Upper lobe of right lung (tissue), 1 donor: ENCODE measurements at regions of chr2 and their contacts with region 1.

Region 1: DNA sequence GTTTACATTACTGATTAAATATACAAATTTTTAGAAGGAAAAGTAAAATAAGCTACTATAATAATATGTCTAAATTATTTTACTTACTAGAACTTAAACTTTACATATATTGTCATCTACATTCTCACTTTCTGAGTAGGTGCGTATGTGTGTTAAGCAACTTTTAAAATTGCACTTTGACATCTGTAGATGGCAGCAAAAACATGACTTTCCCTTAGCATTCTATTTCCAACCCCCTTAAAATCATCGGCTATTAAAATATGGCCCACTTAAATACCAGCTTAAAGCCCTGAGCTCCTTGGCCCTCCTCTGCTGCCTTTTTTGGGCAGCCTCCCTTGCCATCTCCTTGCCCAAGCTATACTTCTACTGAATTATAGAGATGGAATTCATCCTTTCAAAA is 78.0 kb downstream of the UPP2 start:
- DNase-seq: no peak
- ATAC-seq: no peak
- H3K4me3 ChIP-seq: no peak overlapping the region
- H3K27ac ChIP-seq: no peak overlapping the region
- H3K4me1 ChIP-seq: no peaks in the 10 kb centered on the region
- H3K27me3 ChIP-seq: no peaks in the 10 kb centered on the region
- CTCF ChIP-seq: peak; percentile 45

Region 2: DNA sequence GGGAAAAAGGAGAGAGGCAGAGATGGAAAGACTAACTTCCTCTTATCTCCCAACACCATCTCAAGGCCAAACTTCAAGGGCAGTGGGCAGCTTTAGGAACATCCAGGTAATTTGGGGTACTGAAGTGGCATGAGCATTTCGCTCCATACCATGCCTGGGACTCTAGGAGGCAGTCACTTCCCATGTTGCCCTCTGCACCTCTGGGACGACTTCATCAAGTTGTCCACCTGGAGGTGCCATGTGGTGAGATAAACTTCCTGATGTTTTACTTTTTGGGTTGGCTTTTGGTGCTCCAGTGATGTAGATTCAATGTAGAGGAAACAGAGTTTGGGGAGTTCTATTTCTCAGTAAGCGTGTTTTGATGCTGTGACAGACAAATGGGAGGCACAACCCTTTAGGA is 134.3 kb before region 1 on chr2:
- intact Hi-C with region 1: loop called (anchors 10 kb)
- DNase-seq: no peak
- ATAC-seq: no peak
- H3K4me3 ChIP-seq: no peak overlapping the region
- H3K27ac ChIP-seq: no peak overlapping the region
- H3K4me1 ChIP-seq: peaks cover 3% of the 10 kb centered on the region
- H3K27me3 ChIP-seq: no peaks in the 10 kb centered on the region
- CTCF ChIP-seq: no peak

Region 3: GRCh38 chr2:158359839-158360238 is 180.2 kb after region 1 on chr2:
- intact Hi-C with region 1: no loop called
- DNase-seq: no peak
- ATAC-seq: no peak
- H3K4me3 ChIP-seq: no peak overlapping the region
- H3K27ac ChIP-seq: no peak overlapping the region
- H3K4me1 ChIP-seq: no peaks in the 10 kb centered on the region
- H3K27me3 ChIP-seq: no peaks in the 10 kb centered on the region
- CTCF ChIP-seq: no peak